Right ventricle myocardium superior (tissue), 1 donor: ENCODE measurements at regions of chr3 and their contacts with region 1.

Region 1: GRCh38 chr3:24678421-24678865 is 183.8 kb upstream of the THRB start:
- DNase-seq: no peak
- ATAC-seq: no peak

Region 2: GRCh38 chr3:23894254-23895061 is 784.0 kb before region 1 on chr3:
- intact Hi-C with region 1: loop called (anchors 5 kb)
- DNase-seq: no peak
- ATAC-seq: no peak

Region 3: DNA sequence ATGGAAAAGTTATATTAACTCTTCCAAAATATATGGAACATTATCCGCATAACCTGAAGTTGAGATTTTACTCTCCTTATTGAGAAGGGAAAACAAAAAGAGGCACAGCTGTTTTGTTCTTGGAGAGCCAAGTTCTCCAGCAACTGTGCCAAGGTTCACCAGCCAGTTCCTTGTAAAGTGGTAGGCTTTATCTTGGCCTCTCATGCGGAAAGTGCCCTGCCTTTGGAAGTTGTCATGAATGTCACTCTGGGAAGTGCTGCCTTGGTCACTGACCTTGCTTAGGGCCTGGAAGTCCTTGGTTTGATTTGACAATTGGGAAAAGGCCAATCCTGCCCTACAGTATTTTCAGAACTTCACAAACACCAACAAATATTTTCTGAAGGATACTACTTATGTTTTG is 139.6 kb before region 1 on chr3:
- intact Hi-C with region 1: no loop called
- DNase-seq: peak; percentile 51
- ATAC-seq: peak; percentile 98